Dendritic cell treated with granulocyte-macrophage colony-stimulating factor and Interleukin-4, amounts not matched to agents 40 ng/mL and 50 ng/mL, for 4 days (primary cell): ENCODE measurements at regions of chr3 and their contacts with region 1.

Region 1: GRCh38 chr3:113136071-113136470 is 75.3 kb upstream of the BOC start:
- H3K4me3 Mint-ChIP-seq: no peak overlapping the region
- H3K27ac Mint-ChIP-seq: no peak overlapping the region
- H3K4me1 Mint-ChIP-seq: peaks cover 12% of the 10 kb centered on the region
- H3K27me3 Mint-ChIP-seq: no peaks in the 10 kb centered on the region

Region 2: DNA sequence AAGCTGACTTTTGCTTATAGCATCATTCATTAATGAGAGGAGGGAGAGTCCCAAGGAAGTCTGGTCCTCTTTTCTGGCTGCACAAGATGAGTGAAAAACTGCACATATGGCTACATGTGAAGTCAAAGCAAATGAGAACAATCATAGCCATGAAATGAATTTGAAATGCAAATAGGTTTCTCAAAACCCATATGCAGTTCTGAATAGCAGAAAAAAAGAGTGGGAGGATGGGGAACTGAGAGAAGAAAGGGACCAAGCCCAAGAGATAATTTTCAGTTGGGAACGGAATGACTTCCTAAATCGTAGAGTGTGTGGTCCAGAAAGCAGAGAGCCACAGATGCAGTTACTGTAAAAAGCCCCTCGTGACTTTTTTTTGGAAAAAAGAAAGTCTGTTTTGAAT is 79.0 kb before region 1 on chr3:
- intact Hi-C with region 1: loop called (anchors 5 kb)
- H3K4me3 Mint-ChIP-seq: no peak overlapping the region
- H3K27ac Mint-ChIP-seq: no peak overlapping the region
- H3K4me1 Mint-ChIP-seq: peaks cover 5% of the 10 kb centered on the region
- H3K27me3 Mint-ChIP-seq: no peaks in the 10 kb centered on the region

Region 3: GRCh38 chr3:113151461-113152031 is 15.5 kb after region 1 on chr3:
- intact Hi-C with region 1: no loop called
- H3K4me3 Mint-ChIP-seq: no peak overlapping the region
- H3K27ac Mint-ChIP-seq: no peak overlapping the region
- H3K4me1 Mint-ChIP-seq: peaks cover 9% of the 10 kb centered on the region
- H3K27me3 Mint-ChIP-seq: peaks cover 3% of the 10 kb centered on the region

Region 4: GRCh38 chr3:113241292-113242095 is 105.4 kb after region 1 on chr3:
- intact Hi-C with region 1: no loop called
- H3K4me3 Mint-ChIP-seq: no peak overlapping the region
- H3K27ac Mint-ChIP-seq: peak overlapping the region; percentile 11
- H3K4me1 Mint-ChIP-seq: peaks cover 20% of the 10 kb centered on the region
- H3K27me3 Mint-ChIP-seq: peaks cover 15% of the 10 kb centered on the region

Region 5: DNA sequence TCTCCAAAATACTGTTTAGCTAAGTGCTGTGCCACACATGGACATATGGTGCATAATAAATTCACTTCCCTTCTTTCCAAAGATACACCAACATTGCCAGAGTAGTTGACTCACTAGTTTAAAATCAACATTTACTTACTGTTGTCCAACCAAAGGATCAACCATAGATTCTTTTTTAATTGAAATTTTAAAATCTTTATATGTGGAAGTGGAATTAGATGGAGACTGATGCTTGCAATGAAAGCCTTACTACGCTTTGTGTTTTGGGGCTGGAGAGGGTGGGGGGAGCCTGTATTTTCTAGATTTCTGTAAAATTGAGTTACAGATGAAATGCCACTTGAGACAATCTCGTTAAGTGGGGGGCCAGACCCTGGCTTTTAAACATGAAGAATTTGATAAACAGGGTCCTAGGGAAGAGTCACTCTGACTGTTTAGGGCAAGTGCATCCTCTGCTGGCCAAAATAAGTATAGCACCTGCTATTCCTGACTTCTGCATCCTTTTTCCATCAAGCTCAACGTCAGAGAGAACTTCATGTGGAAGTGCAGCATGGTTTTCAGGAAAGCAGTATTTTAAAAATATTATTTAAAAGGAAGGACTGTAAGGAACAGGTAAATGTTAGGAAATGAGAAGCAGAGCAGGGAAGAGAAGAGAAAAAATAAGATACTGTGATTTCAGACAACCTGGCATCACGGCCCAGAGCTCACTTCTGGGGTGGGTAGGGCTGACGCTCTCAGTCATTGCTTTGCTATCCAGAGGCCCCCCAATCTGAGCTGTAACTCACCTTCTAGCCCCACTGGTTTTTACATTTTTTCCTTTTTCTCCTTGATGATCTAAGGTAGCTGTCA is 152.0 kb after region 1 on chr3:
- intact Hi-C with region 1: loop called (anchors 1 kb)
- H3K4me3 Mint-ChIP-seq: no peak overlapping the region
- H3K27ac Mint-ChIP-seq: no peak overlapping the region
- H3K4me1 Mint-ChIP-seq: peaks cover 8% of the 10 kb centered on the region
- H3K27me3 Mint-ChIP-seq: no peaks in the 10 kb centered on the region